Activated B cell treated with CpG ODN at 0.5 μM for 24 hours (primary cell): ENCODE measurements at regions of chr2 and their contacts with region 1.

Region 1: DNA sequence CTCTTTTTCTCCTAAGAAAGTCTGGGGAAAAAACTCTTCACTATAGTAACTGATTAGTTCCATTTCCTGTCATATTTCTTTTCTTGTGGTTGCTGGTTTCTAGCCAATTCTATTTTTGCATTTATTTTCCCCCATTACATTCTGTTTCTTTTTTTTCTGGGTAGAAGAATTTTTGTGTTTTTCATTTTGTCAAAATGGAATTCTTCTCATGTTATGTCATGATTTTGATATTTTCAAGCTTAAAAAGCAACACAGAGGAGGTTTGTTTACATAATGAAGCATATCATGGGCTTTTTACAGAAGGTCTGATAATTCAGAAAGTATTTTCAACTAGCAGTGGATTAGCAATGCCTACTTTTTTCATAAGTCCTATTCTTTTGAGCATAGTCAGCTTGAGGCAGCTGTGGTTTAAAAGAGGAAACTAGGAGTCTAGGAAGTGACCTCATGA is 102.0 kb downstream of the MAP2 start:
- DNase-seq: no peak
- ATAC-seq: no peak
- H3K4me3 Mint-ChIP-seq: peak overlapping the region; percentile 69
- H3K27ac Mint-ChIP-seq: peak overlapping the region; percentile 78
- H3K4me1 Mint-ChIP-seq: peaks cover 50% of the 10 kb centered on the region
- H3K27me3 Mint-ChIP-seq: no peaks in the 10 kb centered on the region
- CTCF ChIP-seq: no peak

Region 2: DNA sequence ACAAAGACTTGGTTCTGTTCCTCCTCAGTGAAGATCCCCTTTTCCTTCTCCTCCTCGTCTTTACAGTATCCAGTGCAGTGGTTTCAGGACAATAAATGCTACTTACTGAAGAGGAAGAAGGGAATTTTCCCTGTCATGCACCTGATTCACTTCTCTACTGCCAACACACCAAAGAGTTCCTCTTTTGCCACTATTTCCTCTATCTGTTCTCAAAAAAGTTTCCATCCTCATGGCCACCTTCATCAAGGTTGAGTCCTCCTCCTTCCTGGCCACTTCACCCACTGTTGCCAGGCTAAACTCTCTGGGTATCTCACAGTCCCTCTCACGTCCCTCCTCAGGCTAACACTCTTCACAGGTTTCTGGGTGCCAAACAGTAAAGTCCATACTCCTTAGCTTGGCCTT is 1542.2 kb before region 1 on chr2:
- CTCF ChIA-PET with region 1: no interaction called
- POLR2A ChIA-PET with region 1: no interaction called
- intact Hi-C with region 1: loop called (anchors 10 kb)
- DNase-seq: peak; percentile 23
- ATAC-seq: peak; percentile 88
- H3K4me3 Mint-ChIP-seq: peak overlapping the region; percentile 70
- H3K27ac Mint-ChIP-seq: peak overlapping the region; percentile 94
- H3K4me1 Mint-ChIP-seq: peaks cover 37% of the 10 kb centered on the region
- H3K27me3 Mint-ChIP-seq: no peaks in the 10 kb centered on the region
- CTCF ChIP-seq: no peak

Region 3: GRCh38 chr2:208210688-208211451 is 1315.0 kb before region 1 on chr2:
- CTCF ChIA-PET with region 1: no interaction called
- POLR2A ChIA-PET with region 1: no interaction called
- intact Hi-C with region 1: no loop called
- DNase-seq: no peak
- ATAC-seq: no peak
- H3K4me3 Mint-ChIP-seq: no peak overlapping the region
- H3K27ac Mint-ChIP-seq: no peak overlapping the region
- H3K4me1 Mint-ChIP-seq: no peaks in the 10 kb centered on the region
- H3K27me3 Mint-ChIP-seq: no peaks in the 10 kb centered on the region
- CTCF ChIP-seq: no peak

Region 4: DNA sequence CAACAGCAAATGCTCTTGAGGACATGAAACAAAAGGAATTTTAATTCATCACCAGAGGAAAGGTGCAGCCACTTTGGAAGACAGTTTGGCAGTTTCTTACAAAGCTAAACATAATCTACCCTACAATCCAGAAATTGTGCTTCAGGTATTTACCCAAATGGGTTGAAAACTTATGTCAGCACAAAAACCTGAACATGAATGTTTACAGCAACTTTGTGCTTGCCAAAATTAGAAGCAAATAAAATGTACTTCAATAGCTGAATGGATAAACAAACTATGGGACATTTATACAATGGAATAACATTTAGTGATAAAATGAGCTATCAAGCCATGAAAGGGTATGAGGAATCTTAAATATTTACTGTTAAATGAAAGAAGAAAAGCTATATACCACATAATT is 108.9 kb before region 1 on chr2:
- CTCF ChIA-PET with region 1: no interaction called
- POLR2A ChIA-PET with region 1: no interaction called
- intact Hi-C with region 1: no loop called
- DNase-seq: no peak
- ATAC-seq: no peak
- H3K4me3 Mint-ChIP-seq: no peak overlapping the region
- H3K27ac Mint-ChIP-seq: no peak overlapping the region
- H3K4me1 Mint-ChIP-seq: no peaks in the 10 kb centered on the region
- H3K27me3 Mint-ChIP-seq: peaks cover 10% of the 10 kb centered on the region
- CTCF ChIP-seq: no peak

Region 5: GRCh38 chr2:209512971-209513370 is 12.9 kb before region 1 on chr2:
- CTCF ChIA-PET with region 1: no interaction called
- POLR2A ChIA-PET with region 1: no interaction called
- intact Hi-C with region 1: loop called (anchors 1 kb)
- DNase-seq: no peak
- ATAC-seq: no peak
- H3K4me3 Mint-ChIP-seq: no peak overlapping the region
- H3K27ac Mint-ChIP-seq: no peak overlapping the region
- H3K4me1 Mint-ChIP-seq: peaks cover 10% of the 10 kb centered on the region
- H3K27me3 Mint-ChIP-seq: no peaks in the 10 kb centered on the region
- CTCF ChIP-seq: no peak

Region 6: GRCh38 chr2:210171309-210172203 is 645.7 kb after region 1 on chr2 and contains the start of gene KANSL1L:
- CTCF ChIA-PET with region 1: no interaction called
- POLR2A ChIA-PET with region 1: no interaction called
- intact Hi-C with region 1: loop called (anchors 10 kb)
- DNase-seq: peak; percentile 99
- ATAC-seq: peak; percentile 83
- H3K4me3 Mint-ChIP-seq: peak within 1 kb of the TSS; percentile 97
- H3K27ac Mint-ChIP-seq: peak within 1 kb of the TSS; percentile 94
- H3K4me1 Mint-ChIP-seq: peaks cover 24% of the 10 kb centered on the region
- H3K27me3 Mint-ChIP-seq: peaks cover 8% of the 10 kb centered on the region
- CTCF ChIP-seq: no peak
- total RNA-seq, gene KANSL1L: 13.1 and 14.2 TPM in 2 replicates

Region 7: GRCh38 chr2:210593166-210593565 is 1067.3 kb after region 1 on chr2:
- CTCF ChIA-PET with region 1: no interaction called
- POLR2A ChIA-PET with region 1: no interaction called
- intact Hi-C with region 1: no loop called
- DNase-seq: no peak
- ATAC-seq: no peak
- H3K4me3 Mint-ChIP-seq: no peak overlapping the region
- H3K27ac Mint-ChIP-seq: no peak overlapping the region
- H3K4me1 Mint-ChIP-seq: no peaks in the 10 kb centered on the region
- H3K27me3 Mint-ChIP-seq: no peaks in the 10 kb centered on the region
- CTCF ChIP-seq: no peak